HepG2 (cell line): ENCODE measurements at regions of chr5 and their contacts with region 1.

Region 1: GRCh38 chr5:23139338-23140171 is 286.4 kb upstream of the CDH12 start:
- DNase-seq: peak; percentile 3
- ATAC-seq: no peak
- H3K4me3 ChIP-seq: no peak overlapping the region
- H3K27ac ChIP-seq: no peak overlapping the region
- H3K4me1 ChIP-seq: no peaks in the 10 kb centered on the region
- H3K27me3 ChIP-seq: no peaks in the 10 kb centered on the region
- CTCF ChIP-seq: peak; percentile 46
- EP300 ChIP-seq: no peak
- POLR2A ChIP-seq: no peak
- RAD21 ChIP-seq: no peak

Region 2: DNA sequence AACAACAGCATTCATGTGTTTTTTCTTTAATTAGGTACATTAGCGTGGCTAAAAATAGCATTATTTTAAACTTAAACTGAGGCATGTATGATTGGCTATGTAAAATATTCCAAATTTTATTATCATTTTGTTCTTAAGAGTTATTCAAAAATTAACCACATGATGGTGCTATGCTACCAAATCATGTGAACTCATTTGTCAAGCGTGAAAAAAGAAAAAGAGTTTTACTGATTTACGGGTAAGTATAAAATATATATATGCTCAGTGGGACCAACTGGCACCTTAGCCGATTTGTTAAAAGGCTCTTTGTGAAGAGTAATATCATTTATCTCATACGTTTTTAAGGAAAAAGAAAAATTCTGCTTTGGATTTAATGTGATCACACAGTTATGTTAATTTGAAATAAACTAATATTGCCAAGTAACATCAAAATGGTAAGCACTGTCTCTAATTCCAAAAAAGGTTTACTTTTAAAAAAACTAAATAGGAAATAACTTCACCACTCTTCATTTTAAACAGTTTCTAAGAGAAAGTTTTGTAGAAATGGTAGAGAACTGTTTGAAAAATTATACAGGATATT is 1328.7 kb before region 1 on chr5:
- CTCF ChIA-PET with region 1: no interaction called
- POLR2A ChIA-PET with region 1: no interaction called
- in situ Hi-C with region 1: no loop called
- intact Hi-C with region 1: loop called (anchors 5 kb)
- DNase-seq: peak; percentile 8
- ATAC-seq: no peak
- H3K4me3 ChIP-seq: no peak overlapping the region
- H3K27ac ChIP-seq: no peak overlapping the region
- H3K4me1 ChIP-seq: no peaks in the 10 kb centered on the region
- H3K27me3 ChIP-seq: no peaks in the 10 kb centered on the region
- CTCF ChIP-seq: peak; percentile 31; the same call in 1 of the 2 replicates
- EP300 ChIP-seq: no peak
- POLR2A ChIP-seq: no peak
- RAD21 ChIP-seq: no peak

Region 3: DNA sequence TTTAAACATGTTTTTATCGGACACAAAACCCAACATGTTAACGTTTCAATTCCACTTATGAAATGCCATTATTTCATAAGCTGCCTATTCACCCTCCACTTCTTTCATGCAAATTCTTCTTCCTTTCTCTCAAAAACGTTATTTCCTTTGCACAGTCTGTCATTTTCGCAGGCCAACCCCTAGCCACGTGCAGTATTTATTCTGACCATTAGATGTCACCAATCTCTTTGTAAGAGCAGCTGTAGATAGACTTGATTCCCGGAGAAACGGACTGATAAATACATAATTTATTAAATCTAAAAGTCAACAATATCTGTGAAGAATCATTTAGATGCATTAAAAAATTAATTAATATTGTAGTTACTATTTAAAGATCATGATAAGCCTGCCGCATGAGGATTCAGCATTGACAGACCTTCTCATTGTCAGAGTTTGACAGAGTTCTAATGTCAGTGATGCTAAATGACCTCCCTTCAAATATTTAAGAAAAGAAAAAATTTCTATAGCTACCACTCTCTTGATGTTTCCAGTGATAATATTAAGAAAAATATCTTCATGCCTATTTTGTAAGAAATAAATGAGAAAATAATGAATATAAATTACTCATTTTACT is 1220.0 kb before region 1 on chr5:
- CTCF ChIA-PET with region 1: no interaction called
- POLR2A ChIA-PET with region 1: no interaction called
- in situ Hi-C with region 1: no loop called
- intact Hi-C with region 1: loop called (anchors 10 kb)
- DNase-seq: peak; percentile 14
- ATAC-seq: peak; percentile 82
- H3K4me3 ChIP-seq: no peak overlapping the region
- H3K27ac ChIP-seq: no peak overlapping the region
- H3K4me1 ChIP-seq: no peaks in the 10 kb centered on the region
- H3K27me3 ChIP-seq: no peaks in the 10 kb centered on the region
- CTCF ChIP-seq: peak; percentile 55
- EP300 ChIP-seq: no peak
- POLR2A ChIP-seq: no peak
- RAD21 ChIP-seq: no peak

Region 4: GRCh38 chr5:22889718-22890117 is 249.8 kb before region 1 on chr5:
- CTCF ChIA-PET with region 1: no interaction called
- POLR2A ChIA-PET with region 1: no interaction called
- in situ Hi-C with region 1: no loop called
- intact Hi-C with region 1: loop called (anchors 5 kb)
- DNase-seq: no peak
- ATAC-seq: no peak
- H3K4me3 ChIP-seq: no peak overlapping the region
- H3K27ac ChIP-seq: no peak overlapping the region
- H3K4me1 ChIP-seq: no peaks in the 10 kb centered on the region
- H3K27me3 ChIP-seq: no peaks in the 10 kb centered on the region
- CTCF ChIP-seq: no peak
- EP300 ChIP-seq: no peak
- POLR2A ChIP-seq: no peak
- RAD21 ChIP-seq: no peak

Region 5: DNA sequence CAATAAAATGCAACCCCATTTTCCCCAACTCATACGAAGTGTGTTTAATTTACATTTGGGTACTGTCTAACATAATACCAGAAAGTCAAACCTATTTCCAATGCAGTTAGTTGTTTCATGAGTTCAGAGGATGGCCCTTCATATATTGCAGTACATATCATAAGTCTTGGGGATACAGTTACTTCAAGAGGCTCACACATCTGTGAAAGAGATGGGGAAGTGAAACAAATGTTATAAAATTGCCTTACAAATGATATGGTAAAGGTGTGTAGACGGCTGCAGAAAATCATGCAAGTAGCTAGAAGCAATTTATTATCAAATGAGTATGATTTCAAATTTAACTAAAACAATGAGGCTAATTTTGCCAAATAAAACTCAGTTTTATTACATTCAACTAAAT is 67.4 kb before region 1 on chr5:
- CTCF ChIA-PET with region 1: no interaction called
- POLR2A ChIA-PET with region 1: no interaction called
- in situ Hi-C with region 1: no loop called
- intact Hi-C with region 1: no loop called
- DNase-seq: no peak
- ATAC-seq: no peak
- H3K4me3 ChIP-seq: no peak overlapping the region
- H3K27ac ChIP-seq: no peak overlapping the region
- H3K4me1 ChIP-seq: no peaks in the 10 kb centered on the region
- H3K27me3 ChIP-seq: no peaks in the 10 kb centered on the region
- CTCF ChIP-seq: no peak
- EP300 ChIP-seq: no peak
- POLR2A ChIP-seq: no peak
- RAD21 ChIP-seq: no peak

Region 6: DNA sequence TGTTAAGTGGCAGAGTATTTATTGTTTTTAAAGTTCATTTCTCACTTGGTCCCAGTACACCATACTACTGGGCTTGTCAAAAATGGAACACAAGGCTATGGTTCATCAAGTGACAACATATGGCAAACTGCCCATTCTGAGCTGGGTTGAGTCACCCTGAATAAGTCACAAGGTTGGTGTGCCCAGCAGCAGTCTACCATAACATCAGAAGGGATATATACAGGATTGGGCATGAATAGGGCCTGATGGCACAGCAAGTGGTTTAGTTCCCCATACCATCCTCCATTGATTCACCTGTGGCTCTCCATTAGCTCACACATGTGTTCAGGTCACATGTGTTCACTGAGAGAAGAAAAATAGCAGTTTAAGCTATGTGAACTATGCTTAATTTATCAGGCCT is 118.1 kb after region 1 on chr5:
- CTCF ChIA-PET with region 1: no interaction called
- POLR2A ChIA-PET with region 1: no interaction called
- in situ Hi-C with region 1: no loop called
- intact Hi-C with region 1: no loop called
- DNase-seq: no peak
- ATAC-seq: no peak
- H3K4me3 ChIP-seq: no peak overlapping the region
- H3K27ac ChIP-seq: no peak overlapping the region
- H3K4me1 ChIP-seq: no peaks in the 10 kb centered on the region
- H3K27me3 ChIP-seq: no peaks in the 10 kb centered on the region
- CTCF ChIP-seq: no peak
- EP300 ChIP-seq: no peak
- POLR2A ChIP-seq: no peak
- RAD21 ChIP-seq: no peak